Left cardiac atrium (tissue), 4 donors: ENCODE measurements at regions of chr21 and their contacts with region 1.

Region 1: GRCh38 chr21:30044445-30045064 is 104.8 kb upstream of the GRIK1 start:
- DNase-seq: no peak
- ATAC-seq: no peak

Region 2: DNA sequence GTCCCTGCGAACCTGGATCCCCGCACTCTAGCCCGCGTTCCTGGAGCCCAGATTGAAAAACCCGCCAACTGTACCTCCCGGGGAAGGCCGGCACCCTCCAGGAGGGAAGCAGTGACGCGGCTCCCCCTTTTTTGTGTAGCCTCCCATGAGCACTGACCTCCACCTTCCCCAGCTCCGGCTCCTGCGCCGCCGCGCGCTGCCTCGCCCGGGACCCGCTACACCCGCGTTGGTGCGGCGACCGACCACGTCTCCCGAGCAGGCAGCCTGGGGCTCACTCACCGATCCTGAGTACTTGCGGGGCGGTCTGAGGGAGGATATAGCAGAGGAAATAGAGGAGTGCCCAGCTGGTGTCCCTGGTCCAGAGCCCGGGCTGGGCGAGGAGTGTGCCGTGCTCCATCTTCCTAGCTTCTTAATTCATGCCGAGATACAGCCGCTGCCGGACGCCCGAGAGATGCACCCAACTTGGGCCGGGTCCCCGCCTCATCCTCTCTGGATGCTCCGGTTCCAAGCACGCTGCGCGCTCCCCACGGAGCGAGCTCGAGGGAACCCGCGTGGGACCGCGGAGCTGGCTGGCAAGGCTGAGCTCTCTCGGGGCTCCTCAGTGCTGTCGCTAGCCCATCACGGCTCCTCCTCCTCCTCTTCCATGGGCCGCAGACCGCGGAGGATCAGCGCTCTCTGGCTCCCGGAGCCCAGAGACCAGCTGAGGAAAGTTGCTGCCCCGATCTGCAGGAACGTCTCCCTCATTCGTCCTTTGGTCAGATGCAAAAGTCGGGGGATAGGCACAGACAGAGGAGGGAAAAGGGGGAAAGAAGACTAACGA is 105.2 kb before region 1 on chr21:
- intact Hi-C with region 1: no loop called
- DNase-seq: no peak
- ATAC-seq: peak in 1 of 2 donors; percentile 30

Region 3: GRCh38 chr21:30194701-30195299 is 150.2 kb after region 1 on chr21:
- intact Hi-C with region 1: loop called in 1 of 2 experiments (anchors 10 kb)
- DNase-seq: no peak
- ATAC-seq: peak in 1 of 2 donors; percentile 33

Region 4: GRCh38 chr21:30434033-30434631 is 389.6 kb after region 1 on chr21:
- intact Hi-C with region 1: loop called in 1 of 2 experiments (anchors 10 kb)
- DNase-seq: no peak
- ATAC-seq: peak in 1 of 2 donors; percentile 54